PC-3 (cell line): ENCODE measurements at regions of chrX and their contacts with region 1.

Region 1: DNA sequence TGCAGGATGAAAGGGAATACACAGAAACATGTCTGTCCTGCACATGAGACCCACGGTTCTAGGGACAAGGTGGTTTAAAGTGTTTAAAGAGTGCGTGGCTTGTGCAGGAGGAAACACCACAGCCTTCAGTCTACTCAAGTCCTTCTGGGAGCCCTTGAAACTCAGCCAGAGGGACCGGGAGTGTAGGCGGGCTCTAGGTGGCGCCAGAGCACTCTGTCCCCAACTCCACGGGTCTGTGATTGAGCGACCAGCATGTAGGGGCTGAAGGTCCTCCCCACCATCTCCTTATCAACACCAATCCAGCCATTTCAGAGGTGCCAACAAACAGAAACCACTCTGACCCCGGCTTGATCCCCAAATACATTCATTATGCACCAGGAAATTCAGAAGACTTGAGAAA is 82.0 kb upstream of the CLDN34 start:
- DNase-seq: peak; percentile 74
- ATAC-seq: peak; percentile 79
- H3K4me3 ChIP-seq: no peak overlapping the region
- H3K27ac ChIP-seq: no peak overlapping the region
- H3K4me1 ChIP-seq: peaks cover 4% of the 10 kb centered on the region
- H3K27me3 ChIP-seq: no peaks in the 10 kb centered on the region
- CTCF ChIP-seq: peak; percentile 80

Region 2: DNA sequence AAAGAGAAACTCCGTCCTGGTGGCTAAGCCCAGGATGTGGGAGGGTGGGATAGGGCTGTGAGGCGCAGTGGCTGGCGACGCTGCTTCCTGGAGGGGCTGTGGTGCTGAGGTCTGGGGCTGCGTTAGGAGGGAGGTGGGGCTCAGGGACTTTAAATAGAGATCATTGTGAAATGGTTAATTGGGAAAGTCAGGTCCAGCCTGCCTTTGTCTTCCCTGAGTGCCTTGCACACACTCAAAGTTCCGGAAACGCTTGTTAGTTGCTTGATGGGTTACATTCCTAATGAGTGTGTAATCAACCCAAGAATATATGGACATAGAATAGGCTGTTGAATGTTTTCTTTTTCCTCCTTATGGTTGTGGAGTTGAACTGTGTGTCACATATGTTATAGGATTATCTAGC is 26.3 kb after region 1 on chrX:
- CTCF ChIA-PET with region 1: no interaction called
- POLR2A ChIA-PET with region 1: no interaction called
- intact Hi-C with region 1: no loop called
- DNase-seq: peak; percentile 80
- ATAC-seq: peak; percentile 48
- H3K4me3 ChIP-seq: peak overlapping the region; percentile 21; the same call in 1 of the 2 replicates
- H3K27ac ChIP-seq: peak overlapping the region; percentile 72
- H3K4me1 ChIP-seq: peaks cover 56% of the 10 kb centered on the region
- H3K27me3 ChIP-seq: no peaks in the 10 kb centered on the region
- CTCF ChIP-seq: no peak

Region 3: GRCh38 chrX:9942086-9942485 is 56.9 kb after region 1 on chrX:
- CTCF ChIA-PET with region 1: no interaction called
- POLR2A ChIA-PET with region 1: no interaction called
- intact Hi-C with region 1: loop called (anchors 2 kb)
- DNase-seq: no peak
- ATAC-seq: no peak
- H3K4me3 ChIP-seq: no peak overlapping the region
- H3K27ac ChIP-seq: no peak overlapping the region
- H3K4me1 ChIP-seq: peaks cover 9% of the 10 kb centered on the region
- H3K27me3 ChIP-seq: no peaks in the 10 kb centered on the region
- CTCF ChIP-seq: no peak

Region 4: DNA sequence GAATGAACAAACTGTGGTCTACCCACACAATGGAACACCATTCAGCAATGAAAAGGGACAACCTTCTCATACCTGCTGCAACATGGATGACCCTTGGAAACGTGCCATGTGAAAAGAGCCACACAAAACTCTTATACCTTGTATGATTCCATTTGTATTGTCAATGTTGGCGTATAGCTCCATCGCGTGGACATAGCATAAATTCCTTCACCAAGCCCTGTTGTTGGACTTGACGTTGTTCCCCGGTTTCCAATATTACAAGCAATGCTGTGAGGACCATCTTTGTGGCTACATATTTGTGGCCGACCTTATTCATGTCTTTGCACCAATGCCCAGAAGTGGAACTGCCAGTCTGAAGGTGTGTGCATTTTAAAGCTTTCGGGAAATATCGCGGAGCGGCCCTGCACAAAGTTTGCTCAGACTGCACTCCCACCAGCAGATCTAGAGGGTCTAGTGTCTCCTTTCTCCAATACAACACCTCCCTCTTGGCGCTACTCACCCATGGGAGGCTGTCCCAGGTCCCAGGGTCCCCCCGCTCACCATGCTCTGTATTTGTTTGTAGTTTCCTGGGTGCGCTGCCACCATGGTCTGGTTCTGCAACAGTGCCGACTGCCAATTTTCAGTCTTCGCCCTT is 81.7 kb after region 1 on chrX and contains the start of gene CLDN34:
- CTCF ChIA-PET with region 1: no interaction called
- POLR2A ChIA-PET with region 1: no interaction called
- intact Hi-C with region 1: no loop called
- DNase-seq: no peak
- ATAC-seq: no peak
- H3K4me3 ChIP-seq: no peak within 1 kb of the TSS
- H3K27ac ChIP-seq: no peak within 1 kb of the TSS
- H3K4me1 ChIP-seq: no peaks in the 10 kb centered on the region
- H3K27me3 ChIP-seq: no peaks in the 10 kb centered on the region
- CTCF ChIP-seq: no peak
- total RNA-seq, gene CLDN34: 0.66 TPM in 1 of 2 replicates, not detected in the other

Region 5: DNA sequence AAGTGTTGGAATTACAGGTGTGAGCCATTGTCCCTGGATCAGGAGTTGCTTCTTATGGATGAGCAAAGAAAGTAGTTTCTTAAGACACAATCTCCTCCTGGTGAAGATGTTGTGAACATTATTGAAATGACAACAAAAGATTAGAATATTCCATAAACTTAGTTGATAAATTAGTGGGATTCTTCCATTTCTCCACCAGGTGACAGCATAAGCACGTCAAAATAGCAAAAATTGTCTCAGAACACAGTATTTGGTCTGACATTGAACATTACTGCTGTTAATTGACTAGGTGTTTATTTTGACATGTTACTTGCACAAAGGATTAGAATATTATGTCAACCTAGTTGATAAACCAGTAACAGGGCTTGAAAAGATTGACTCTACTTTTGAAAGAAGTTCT is 103.6 kb after region 1 on chrX:
- CTCF ChIA-PET with region 1: no interaction called
- POLR2A ChIA-PET with region 1: no interaction called
- intact Hi-C with region 1: loop called (anchors 5 kb)
- DNase-seq: peak; percentile 59
- ATAC-seq: peak; percentile 24; the same call in 1 of the 2 replicates
- H3K4me3 ChIP-seq: no peak overlapping the region
- H3K27ac ChIP-seq: no peak overlapping the region
- H3K4me1 ChIP-seq: no peaks in the 10 kb centered on the region
- H3K27me3 ChIP-seq: no peaks in the 10 kb centered on the region
- CTCF ChIP-seq: peak; percentile 74